Heart left ventricle (tissue), 16 donors: ENCODE measurements at regions of chr3 and their contacts with region 1.

Region 1: GRCh38 chr3:4493014-4493940 is at the start of gene ITPR1:
- DNase-seq: peak; percentile 98 to 99 (median 99)
- ATAC-seq: peak; percentile 98 to 99 (median 99)
- H3K4me3 ChIP-seq: peak within 1 kb of the TSS; percentile 59 to 96 (median 78)
- H3K27ac ChIP-seq: peak within 1 kb of the TSS; percentile 68 to 97 (median 87)
- H3K4me1 ChIP-seq: peaks cover 0 to 50% (median 26%) of the 10 kb centered on the region in 12 donors
- H3K27me3 ChIP-seq: no peaks in the 10 kb centered on the region
- CTCF ChIP-seq: no peak
- POLR2A ChIP-seq: peak; percentile 90 to 99
- total RNA-seq, gene ITPR1: 16.5 to 55.8 (median 20.1) TPM

Region 2: GRCh38 chr3:4466741-4467521 is 26.3 kb before region 1 on chr3 and contains the start of gene SUMF1:
- intact Hi-C with region 1: loop called in 1 of 10 experiments (anchors 2 kb)
- DNase-seq: peak; percentile 77 to 87 (median 81)
- ATAC-seq: peak; percentile 97 to 99 (median 99)
- H3K4me3 ChIP-seq: peak within 1 kb of the TSS; percentile 71 to 97 (median 88)
- H3K27ac ChIP-seq: peak within 1 kb of the TSS in 11 of 12 donors; percentile 53 to 90 (median 80)
- H3K4me1 ChIP-seq: peaks cover 0 to 23% (median 13%) of the 10 kb centered on the region in 12 donors
- H3K27me3 ChIP-seq: no peaks in the 10 kb centered on the region
- CTCF ChIP-seq: no peak
- POLR2A ChIP-seq: peak in 1 of 2 donors; percentile 53
- total RNA-seq, gene SUMF1: 5.8 to 21.1 (median 11.2) TPM

Region 3: GRCh38 chr3:4633078-4634004 is 140.1 kb after region 1 on chr3:
- intact Hi-C with region 1: loop called in 9 of 10 experiments (anchors 1 to 10 kb)
- DNase-seq: no peak
- ATAC-seq: peak in 3 of 4 donors; percentile 74 to 81 (median 78)
- H3K4me3 ChIP-seq: no peak overlapping the region
- H3K27ac ChIP-seq: no peak overlapping the region
- H3K4me1 ChIP-seq: peaks cover 0 to 6% (median 0%) of the 10 kb centered on the region in 12 donors
- H3K27me3 ChIP-seq: no peaks in the 10 kb centered on the region
- CTCF ChIP-seq: peak; percentile 80 to 91 (median 84)
- POLR2A ChIP-seq: no peak